ENCODE measurements at regions of chr9 and their contacts with region 1.

Region 1: DNA sequence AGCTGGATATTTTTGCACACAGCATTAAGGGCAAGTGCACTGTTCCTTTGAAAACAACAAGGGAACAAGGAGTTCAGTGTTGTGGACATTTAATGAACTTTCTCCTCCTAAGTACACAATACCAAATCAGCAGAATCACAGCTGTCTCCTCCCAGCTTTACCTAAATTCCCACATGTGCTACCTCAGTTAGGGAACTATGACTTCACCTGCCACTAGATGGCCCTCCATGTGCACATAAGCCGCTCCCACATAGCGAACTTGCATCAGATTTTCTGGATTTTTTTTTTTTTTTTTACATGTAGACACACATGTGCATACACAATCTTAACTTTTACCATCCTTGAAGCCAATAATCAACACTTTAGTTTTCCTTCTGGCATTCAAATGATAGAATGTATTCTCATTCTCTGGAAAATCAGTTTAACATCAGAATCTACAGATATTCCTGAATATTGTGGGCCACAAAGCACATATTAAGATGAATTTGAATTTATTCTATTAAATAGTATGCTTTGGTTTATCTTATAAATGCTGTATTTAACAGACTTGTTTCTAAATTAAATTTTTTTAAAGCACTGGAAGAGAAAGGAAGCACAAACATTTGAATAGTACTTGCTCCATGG is 123.6 kb downstream of the PALM2AKAP2 start:
- DNase-seq: peak; percentile 62
- H3K4me3 ChIP-seq: no peak overlapping the region; a peak in 1 of 4 replicates
- H3K27ac ChIP-seq: 0 out of 4 replicates have a peak overlapping the region, but pooled peaks of 1 of the 2 experiments have one; percentile 55
- H3K4me1 ChIP-seq: peaks cover 3 to 18% of the 10 kb centered on the region in 2 experiments
- H3K27me3 ChIP-seq: no peaks in the 10 kb centered on the region
- CTCF ChIP-seq: peak; percentile 93
- EP300 ChIP-seq: no peak
- RAD21 ChIP-seq: peak; percentile 93

Region 2: GRCh38 chr9:109887079-109887478 is 16.5 kb before region 1 on chr9:
- CTCF ChIA-PET with region 1: interaction called, 11 read pairs
- POLR2A ChIA-PET with region 1: no interaction called
- DNase-seq: no peak
- H3K4me3 ChIP-seq: no peak overlapping the region
- H3K27ac ChIP-seq: peak overlapping the region in 1 of 2 experiments; percentile 79; a peak in 2 of 4 replicates
- H3K4me1 ChIP-seq: peaks cover 0 to 10% of the 10 kb centered on the region in 2 experiments; a peak in 1 of 4 replicates
- H3K27me3 ChIP-seq: no peaks in the 10 kb centered on the region
- CTCF ChIP-seq: no peak
- EP300 ChIP-seq: peak in 1 of 2 experiments; percentile 19; a peak in 1 of 4 replicates
- RAD21 ChIP-seq: no peak

Region 3: GRCh38 chr9:109914280-109915027 is 10.8 kb after region 1 on chr9:
- CTCF ChIA-PET with region 1: interaction called, 28 read pairs
- POLR2A ChIA-PET with region 1: no interaction called
- DNase-seq: no peak
- H3K4me3 ChIP-seq: no peak overlapping the region
- H3K27ac ChIP-seq: peak overlapping the region in 1 of 2 experiments; percentile 91; a peak in 1 of 4 replicates
- H3K4me1 ChIP-seq: peaks cover 2 to 28% of the 10 kb centered on the region in 2 experiments; a peak in 3 of 4 replicates
- H3K27me3 ChIP-seq: no peaks in the 10 kb centered on the region
- CTCF ChIP-seq: no peak
- EP300 ChIP-seq: no peak
- RAD21 ChIP-seq: no peak

Region 4: DNA sequence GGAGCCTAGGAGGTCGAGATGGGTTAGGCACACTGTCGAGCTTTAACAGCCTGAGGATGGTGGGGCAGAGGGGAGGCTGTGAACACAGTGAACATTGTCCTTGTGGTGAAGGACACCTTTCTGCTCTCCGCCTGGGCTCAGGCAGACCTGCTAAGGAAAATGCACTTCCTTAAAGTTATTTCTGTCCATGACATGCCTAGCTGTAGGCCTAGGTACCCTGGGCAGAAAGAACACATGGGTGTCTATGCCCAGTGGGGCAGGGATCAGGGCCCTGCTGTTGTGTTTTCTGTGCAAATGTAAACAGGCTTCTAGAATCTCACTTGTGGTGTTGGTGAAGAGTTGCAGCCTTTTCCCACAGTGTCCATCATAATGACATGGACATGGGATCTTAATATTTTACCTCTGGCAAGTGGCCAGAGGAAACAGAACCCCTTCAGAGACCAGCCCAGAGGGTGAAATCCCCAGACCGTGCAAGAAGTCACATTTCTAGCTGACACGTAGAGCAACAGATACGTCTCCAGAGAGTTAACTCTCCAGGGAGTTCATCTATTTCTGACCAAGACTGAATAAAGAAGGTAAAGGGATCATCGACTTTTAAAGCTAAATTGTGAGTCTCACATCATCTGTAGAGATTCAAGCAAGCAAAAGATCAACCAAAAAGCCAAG is 225.2 kb after region 1 on chr9:
- CTCF ChIA-PET with region 1: interaction called, 10 read pairs
- POLR2A ChIA-PET with region 1: no interaction called
- DNase-seq: no peak
- H3K4me3 ChIP-seq: no peak overlapping the region
- H3K27ac ChIP-seq: no peak overlapping the region
- H3K4me1 ChIP-seq: peaks cover 0 to 17% of the 10 kb centered on the region in 2 experiments; a peak in 1 of 4 replicates
- H3K27me3 ChIP-seq: no peaks in the 10 kb centered on the region
- CTCF ChIP-seq: no peak
- EP300 ChIP-seq: no peak
- RAD21 ChIP-seq: no peak

Region 5: DNA sequence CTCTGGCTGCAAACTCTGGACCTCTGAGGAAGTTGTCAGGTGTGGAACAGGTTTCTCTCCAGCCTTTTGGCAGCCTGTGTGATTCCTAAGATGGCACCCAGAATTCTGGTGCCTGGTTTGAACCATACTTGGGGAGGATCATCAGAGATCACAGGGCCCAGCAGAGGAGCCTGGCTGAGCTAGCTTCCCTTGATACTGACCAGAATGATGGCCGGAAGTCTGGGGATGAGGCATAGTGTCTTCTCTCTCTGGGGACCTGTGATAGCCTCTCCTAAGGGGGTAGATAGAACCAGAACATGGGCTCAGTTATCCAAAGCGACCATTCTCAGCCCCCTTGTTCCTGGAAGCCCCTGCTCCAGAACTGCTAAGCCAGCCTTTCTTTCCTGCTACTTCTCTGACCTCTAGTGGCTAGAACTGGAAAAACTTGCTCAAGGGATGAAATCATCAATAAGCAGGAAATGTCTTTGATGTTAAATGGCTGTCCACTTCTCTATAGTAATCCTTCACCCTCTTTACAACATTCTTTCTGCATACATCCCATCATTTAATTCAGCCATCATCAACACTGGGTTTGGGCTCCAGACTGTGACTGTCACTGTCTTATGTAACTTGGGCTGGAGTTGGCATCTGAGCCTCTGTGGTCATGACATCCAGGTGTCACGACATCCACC is 249.2 kb after region 1 on chr9:
- CTCF ChIA-PET with region 1: interaction called, 179 read pairs
- POLR2A ChIA-PET with region 1: no interaction called
- DNase-seq: peak; percentile 62
- H3K4me3 ChIP-seq: no peak overlapping the region
- H3K27ac ChIP-seq: peak overlapping the region in 1 of 2 experiments; percentile 9; a peak in 1 of 4 replicates
- H3K4me1 ChIP-seq: peaks cover 0 to 13% of the 10 kb centered on the region in 2 experiments; a peak in 1 of 4 replicates
- H3K27me3 ChIP-seq: no peaks in the 10 kb centered on the region
- CTCF ChIP-seq: peak; percentile 83
- EP300 ChIP-seq: no peak
- RAD21 ChIP-seq: peak; percentile 96

Measured in SK-N-SH (cell line).